MCF 10A (cell line): ENCODE measurements at regions of chr5 and their contacts with region 1.

Region 1: GRCh38 chr5:149537374-149537975 is 13.8 kb downstream of the CSNK1A1 start:
- DNase-seq: no peak
- H3K4me3 Mint-ChIP-seq: no peak overlapping the region
- H3K27ac Mint-ChIP-seq: peak overlapping the region; percentile 5
- H3K4me1 Mint-ChIP-seq: peaks cover 41% of the 10 kb centered on the region
- H3K27me3 Mint-ChIP-seq: no peaks in the 10 kb centered on the region
- CTCF ChIP-seq: no peak

Region 2: GRCh38 chr5:149526845-149527580 is 10.5 kb before region 1 on chr5:
- CTCF ChIA-PET with region 1: interaction called, 10 read pairs
- POLR2A ChIA-PET with region 1: interaction called, 379 read pairs
- intact Hi-C with region 1: no loop called
- DNase-seq: no peak
- H3K4me3 Mint-ChIP-seq: no peak overlapping the region
- H3K27ac Mint-ChIP-seq: peak overlapping the region; percentile 46
- H3K4me1 Mint-ChIP-seq: peaks cover 62% of the 10 kb centered on the region
- H3K27me3 Mint-ChIP-seq: no peaks in the 10 kb centered on the region
- CTCF ChIP-seq: no peak